T-cell (primary cell): ENCODE measurements at regions of chr6 and their contacts with region 1.

Region 1: GRCh38 chr6:139369568-139370282 is 4.7 kb downstream of the CITED2 start:
- DNase-seq: peak in 2 of 35 experiments; percentile 13 to 67
- ATAC-seq: no peak
- H3K4me3 ChIP-seq: peak overlapping the region in 1 of 2 donors; percentile 13
- H3K4me3 Mint-ChIP-seq: peak overlapping the region; percentile 60 to 100 (median 99)
- H3K27ac ChIP-seq: peak overlapping the region; percentile 93
- H3K27ac Mint-ChIP-seq: peak overlapping the region; percentile 97 to 99
- H3K4me1 ChIP-seq: peaks cover 18 to 19% of the 10 kb centered on the region in 2 experiments
- H3K4me1 Mint-ChIP-seq: peaks cover 42 to 48% (median 47%) of the 10 kb centered on the region in 3 donors
- H3K27me3 ChIP-seq: no peaks in the 10 kb centered on the region
- H3K27me3 Mint-ChIP-seq: no peaks in the 10 kb centered on the region

Region 2: DNA sequence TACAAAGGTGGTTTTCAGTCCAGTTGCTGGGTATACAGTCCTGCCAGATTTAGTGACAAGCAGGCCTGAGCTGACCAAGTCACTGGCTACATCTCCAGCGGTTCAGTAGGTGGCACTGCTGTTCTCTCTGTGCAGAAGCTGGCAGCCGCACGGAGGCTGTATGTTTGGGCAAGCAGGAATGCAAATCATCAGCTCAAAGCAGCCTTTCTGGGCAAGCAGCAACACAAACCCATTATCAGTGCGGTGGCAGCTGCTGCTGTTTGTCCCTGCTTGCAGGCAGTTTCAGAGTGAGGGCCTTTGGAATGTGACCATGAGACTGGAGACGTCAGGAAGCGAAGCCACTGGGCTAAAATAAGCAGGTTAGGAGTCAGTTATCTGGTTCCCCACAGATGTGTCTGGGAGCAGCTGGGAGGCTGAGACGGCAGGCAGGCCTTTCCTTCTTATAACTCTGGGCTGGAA is 150.4 kb before region 1 on chr6:
- CTCF ChIA-PET with region 1: interaction called, 33 to 145 read pairs
- POLR2A ChIA-PET with region 1: interaction called in 1 of 2 experiments, 11 read pairs
- DNase-seq: peak; percentile 40 to 82 (median 63)
- ATAC-seq: peak; percentile 99 to 100 (median 100)
- H3K4me3 ChIP-seq: no peak overlapping the region
- H3K4me3 Mint-ChIP-seq: peak overlapping the region; percentile 12 to 44 (median 41)
- H3K27ac ChIP-seq: peak overlapping the region; percentile 10
- H3K27ac Mint-ChIP-seq: peak overlapping the region; percentile 95 to 97
- H3K4me1 ChIP-seq: peaks cover 0 to 7% of the 10 kb centered on the region in 2 experiments
- H3K4me1 Mint-ChIP-seq: peaks cover 8 to 11% (median 10%) of the 10 kb centered on the region in 3 donors
- H3K27me3 ChIP-seq: no peaks in the 10 kb centered on the region
- H3K27me3 Mint-ChIP-seq: no peaks in the 10 kb centered on the region

Region 3: GRCh38 chr6:139468178-139468819 is 98.6 kb after region 1 on chr6:
- CTCF ChIA-PET with region 1: no interaction called
- POLR2A ChIA-PET with region 1: no interaction called
- DNase-seq: no peak
- ATAC-seq: no peak
- H3K4me3 ChIP-seq: no peak overlapping the region
- H3K4me3 Mint-ChIP-seq: no peak overlapping the region
- H3K27ac ChIP-seq: no peak overlapping the region
- H3K27ac Mint-ChIP-seq: no peak overlapping the region
- H3K4me1 ChIP-seq: no peaks in the 10 kb centered on the region
- H3K4me1 Mint-ChIP-seq: no peaks in the 10 kb centered on the region
- H3K27me3 ChIP-seq: no peaks in the 10 kb centered on the region
- H3K27me3 Mint-ChIP-seq: no peaks in the 10 kb centered on the region